Activated CD8-positive, alpha-beta T cell treated with anti-CD3 and anti-CD28 coated beads for 36 hours (primary cell): ENCODE measurements at regions of chr6 and their contacts with region 1.

Region 1: DNA sequence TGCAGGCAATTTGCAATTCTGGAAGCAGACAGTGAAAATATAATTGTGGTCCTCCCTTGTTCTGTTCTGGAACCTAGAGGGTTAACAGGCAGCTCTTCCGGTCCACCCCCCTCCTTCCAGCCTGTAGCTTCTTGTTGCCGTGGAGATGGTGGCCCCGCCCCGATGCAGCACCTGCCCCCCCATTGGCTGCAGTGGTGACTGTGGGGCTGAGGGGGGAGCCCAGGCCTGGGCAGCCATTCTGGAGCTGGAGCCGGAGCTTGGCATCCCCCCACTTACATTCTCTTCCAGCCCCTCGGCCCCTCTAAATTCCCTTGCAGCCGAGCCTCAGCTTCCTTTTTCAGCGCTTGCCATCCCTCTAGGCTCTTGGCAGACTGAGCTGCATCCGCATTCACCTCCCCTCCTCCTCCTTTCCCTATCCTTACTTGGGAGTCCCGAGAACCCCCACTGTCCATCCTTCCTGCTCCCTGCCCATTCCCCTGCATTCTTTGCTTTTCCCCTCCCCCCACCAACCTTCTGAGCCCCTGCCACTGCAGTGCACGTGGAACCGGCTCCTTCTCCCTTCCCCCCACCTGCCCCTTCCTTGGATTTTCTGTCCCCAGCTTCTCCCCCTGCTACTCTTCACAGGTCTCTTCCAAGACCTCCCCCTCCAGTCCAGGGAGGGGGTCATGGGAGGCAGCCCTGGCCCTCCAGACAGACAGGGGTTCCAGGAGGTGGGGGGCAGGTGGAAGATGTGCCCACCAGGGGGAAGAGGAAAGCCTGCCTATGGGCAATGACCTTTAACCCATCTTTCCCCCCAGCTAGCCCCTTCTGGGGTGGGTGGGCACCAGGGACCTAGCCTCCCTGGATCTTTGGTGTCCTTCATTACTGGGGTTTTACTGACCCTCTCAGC is 11.4 kb downstream of the SYNGAP1 start:
- DNase-seq: peak; percentile 93
- ATAC-seq: peak; percentile 70
- H3K4me3 Mint-ChIP-seq: peak overlapping the region; percentile 88
- H3K27ac Mint-ChIP-seq: peak overlapping the region; percentile 91
- H3K4me1 Mint-ChIP-seq: peaks cover 60% of the 10 kb centered on the region
- H3K27me3 Mint-ChIP-seq: no peaks in the 10 kb centered on the region
- CTCF ChIP-seq: no peak

Region 2: GRCh38 chr6:32920715-32921114 is 510.5 kb before region 1 on chr6:
- CTCF ChIA-PET with region 1: no interaction called
- POLR2A ChIA-PET with region 1: no interaction called
- intact Hi-C with region 1: no loop called
- DNase-seq: no peak
- ATAC-seq: no peak
- H3K4me3 Mint-ChIP-seq: no peak overlapping the region
- H3K27ac Mint-ChIP-seq: no peak overlapping the region
- H3K4me1 Mint-ChIP-seq: no peaks in the 10 kb centered on the region
- H3K27me3 Mint-ChIP-seq: no peaks in the 10 kb centered on the region
- CTCF ChIP-seq: no peak

Region 3: DNA sequence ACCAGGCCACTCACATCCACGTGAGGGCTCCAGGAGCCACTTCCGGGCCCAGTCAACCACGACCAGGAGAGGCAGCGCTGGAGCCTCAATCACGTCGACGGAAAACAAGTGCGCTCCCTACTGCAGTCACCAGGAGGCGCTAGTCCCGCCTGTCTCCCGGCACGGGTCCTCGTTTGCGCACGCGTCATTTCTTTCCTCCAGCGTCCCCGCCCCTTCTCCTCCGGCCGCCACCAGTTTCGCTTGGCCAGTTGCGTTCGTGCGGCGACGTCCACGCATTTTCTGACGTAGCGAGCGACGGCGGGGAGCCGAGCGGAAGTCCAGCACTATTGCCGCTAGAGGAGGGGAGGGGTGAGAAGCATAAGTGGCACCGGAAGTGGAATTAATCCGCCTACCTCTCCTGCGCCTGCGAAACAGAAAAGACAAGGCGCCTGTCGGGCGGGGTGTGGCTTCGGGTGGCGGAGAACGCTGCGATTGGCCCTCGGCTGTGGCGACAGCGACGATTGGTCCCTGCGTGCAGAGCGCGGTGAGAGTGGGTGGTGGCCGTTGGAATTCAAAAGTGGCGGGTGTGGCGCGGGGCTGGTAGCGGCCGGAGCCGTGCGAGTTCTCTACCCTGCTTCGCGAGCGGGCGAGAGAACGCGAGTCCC is 39.8 kb before region 1 on chr6 and contains the start of gene KIFC1:
- CTCF ChIA-PET with region 1: interaction called, 11 read pairs
- POLR2A ChIA-PET with region 1: interaction called, 6 read pairs
- intact Hi-C with region 1: loop called (anchors 5 kb)
- DNase-seq: peak; percentile 99
- ATAC-seq: peak; percentile 91
- H3K4me3 Mint-ChIP-seq: peak within 1 kb of the TSS; percentile 89
- H3K27ac Mint-ChIP-seq: peak within 1 kb of the TSS; percentile 93
- H3K4me1 Mint-ChIP-seq: peaks cover 36% of the 10 kb centered on the region
- H3K27me3 Mint-ChIP-seq: no peaks in the 10 kb centered on the region
- CTCF ChIP-seq: peak; percentile 96
- total RNA-seq, gene KIFC1: 93.4 to 96.0 TPM

Region 4: DNA sequence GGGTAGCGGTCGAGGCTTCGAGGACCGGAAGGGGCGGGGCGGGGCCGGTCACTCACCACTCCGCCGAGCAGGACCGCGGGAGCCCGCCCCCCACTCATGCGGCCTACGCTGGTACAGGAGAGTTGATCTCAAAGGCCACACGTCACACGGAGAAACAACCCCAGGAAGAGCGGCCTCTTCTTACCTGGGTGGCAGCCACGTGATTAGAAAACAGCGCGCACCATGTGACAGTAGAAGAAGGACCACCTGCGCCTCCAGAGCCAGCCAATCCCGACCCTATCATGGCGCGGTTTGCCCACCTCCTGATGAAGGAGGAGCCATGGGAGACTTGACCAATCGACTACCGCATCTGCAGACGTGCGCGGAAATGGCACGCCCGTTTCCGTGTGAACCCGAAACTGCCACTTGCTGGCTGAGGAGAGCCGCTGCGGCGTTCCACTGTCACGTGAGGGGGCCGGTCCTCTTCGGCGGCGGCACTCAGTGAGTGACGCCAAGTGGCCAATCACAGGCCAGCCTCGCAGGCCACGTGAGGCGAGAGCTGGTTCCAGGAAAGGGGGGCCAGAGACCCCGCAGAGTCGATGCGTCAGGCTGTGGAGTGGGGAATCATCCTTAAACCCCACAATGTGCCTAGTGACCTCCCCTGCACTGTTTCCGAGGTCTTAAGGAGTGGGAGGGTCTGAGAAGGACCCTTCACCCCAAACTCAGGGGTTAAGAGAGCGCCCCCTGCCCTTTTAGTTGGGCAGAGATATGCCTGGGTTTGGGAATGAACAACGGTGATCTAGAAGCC is 13.1 kb before region 1 on chr6 and contains the start of gene CUTA:
- CTCF ChIA-PET with region 1: interaction called, 5 read pairs
- POLR2A ChIA-PET with region 1: interaction called, 46 read pairs
- intact Hi-C with region 1: no loop called
- DNase-seq: peak; percentile 99
- ATAC-seq: peak; percentile 89
- H3K4me3 Mint-ChIP-seq: peak within 1 kb of the TSS; percentile 98
- H3K27ac Mint-ChIP-seq: peak within 1 kb of the TSS; percentile 100
- H3K4me1 Mint-ChIP-seq: peaks cover 60% of the 10 kb centered on the region
- H3K27me3 Mint-ChIP-seq: no peaks in the 10 kb centered on the region
- CTCF ChIP-seq: peak; percentile 25
- total RNA-seq, gene CUTA: 155 to 160 TPM

Region 5: DNA sequence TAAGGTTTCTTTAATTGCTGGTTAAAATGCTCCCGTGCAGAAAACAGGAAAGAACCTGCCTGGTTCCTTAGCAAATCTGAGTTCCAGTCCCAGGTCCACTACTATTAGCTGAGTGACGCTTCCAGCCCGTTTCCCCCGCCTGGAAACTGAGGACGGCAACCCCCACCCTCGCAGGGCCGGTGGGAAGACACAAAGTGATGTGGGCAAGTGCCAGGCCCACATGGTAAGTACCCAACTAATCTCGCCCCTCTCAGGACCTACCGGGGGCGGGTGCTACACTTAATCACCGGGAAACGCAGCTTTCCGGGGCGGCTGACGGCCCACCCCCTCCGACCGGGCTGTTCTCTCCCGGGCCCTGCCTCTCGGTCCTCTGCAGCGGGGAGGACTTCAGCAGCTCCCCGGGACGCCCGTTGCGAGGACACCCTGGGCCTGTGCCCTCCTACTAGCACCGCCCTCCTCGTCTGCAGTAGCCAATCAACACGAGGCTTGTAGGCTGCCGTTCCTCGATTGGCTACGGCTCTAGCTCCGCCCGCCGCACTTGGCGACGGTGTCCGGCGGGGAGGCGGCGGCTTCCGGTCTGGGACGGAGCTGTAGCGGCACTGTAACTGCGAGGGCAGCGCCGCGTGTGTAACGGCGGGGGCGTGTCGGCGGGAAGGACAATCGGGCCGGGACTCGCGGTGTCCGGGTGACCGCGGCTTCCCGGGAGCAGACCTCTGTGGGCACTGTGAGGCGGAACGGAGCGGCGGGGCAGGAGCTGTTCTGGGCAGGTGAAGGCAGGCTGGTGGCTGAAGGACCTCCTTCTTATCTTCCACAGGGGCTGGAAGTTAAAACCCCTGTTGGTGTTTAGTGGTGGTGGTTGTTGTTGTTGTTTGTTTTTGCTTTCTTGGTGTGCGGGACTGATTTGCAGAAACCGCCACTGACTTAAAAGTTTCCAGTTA is 23.0 kb after region 1 on chr6 and contains the start of gene ZBTB9:
- CTCF ChIA-PET with region 1: interaction called, 10 read pairs
- POLR2A ChIA-PET with region 1: interaction called, 5 read pairs
- intact Hi-C with region 1: no loop called
- DNase-seq: peak; percentile 96
- ATAC-seq: peak; percentile 99
- H3K4me3 Mint-ChIP-seq: peak within 1 kb of the TSS; percentile 84
- H3K27ac Mint-ChIP-seq: peak within 1 kb of the TSS; percentile 90
- H3K4me1 Mint-ChIP-seq: peaks cover 29% of the 10 kb centered on the region
- H3K27me3 Mint-ChIP-seq: no peaks in the 10 kb centered on the region
- CTCF ChIP-seq: no peak
- total RNA-seq, gene ZBTB9: 7.8 to 8.7 TPM

Region 6: GRCh38 chr6:33570806-33571636 is 139.8 kb after region 1 on chr6:
- CTCF ChIA-PET with region 1: no interaction called
- POLR2A ChIA-PET with region 1: interaction called, 11 read pairs
- intact Hi-C with region 1: loop called (anchors 10 kb)
- DNase-seq: peak; percentile 98
- ATAC-seq: peak; percentile 89
- H3K4me3 Mint-ChIP-seq: peak overlapping the region; percentile 82
- H3K27ac Mint-ChIP-seq: peak overlapping the region; percentile 100
- H3K4me1 Mint-ChIP-seq: peaks cover 37% of the 10 kb centered on the region
- H3K27me3 Mint-ChIP-seq: no peaks in the 10 kb centered on the region
- CTCF ChIP-seq: no peak